ENCODE measurements at regions of chr11 and their contacts with region 1.

Region 1: GRCh38 chr11:12288212-12288930 is 89.0 kb upstream of the PARVA start:
- DNase-seq: peak; percentile 94
- ATAC-seq: peak; percentile 21
- H3K4me3 ChIP-seq: no peak overlapping the region
- H3K27ac ChIP-seq: peak overlapping the region; percentile 97
- H3K4me1 ChIP-seq: peaks cover 34% of the 10 kb centered on the region
- H3K27me3 ChIP-seq: no peaks in the 10 kb centered on the region
- CTCF ChIP-seq: peak; percentile 99
- POLR2A ChIP-seq: no peak
- RAD21 ChIP-seq: peak; percentile 98

Region 2: GRCh38 chr11:12318791-12319438 is 30.5 kb after region 1 on chr11:
- CTCF ChIA-PET with region 1: interaction called, 11 read pairs
- POLR2A ChIA-PET with region 1: interaction called, 9 read pairs
- dilution Hi-C with region 1: no loop called
- in situ Hi-C with region 1: no loop called
- intact Hi-C with region 1: loop called (anchors 1 kb)
- DNase-seq: peak; percentile 89
- ATAC-seq: peak; percentile 70
- H3K4me3 ChIP-seq: no peak overlapping the region
- H3K27ac ChIP-seq: peak overlapping the region; percentile 96
- H3K4me1 ChIP-seq: peaks cover 23% of the 10 kb centered on the region
- H3K27me3 ChIP-seq: no peaks in the 10 kb centered on the region
- CTCF ChIP-seq: no peak
- POLR2A ChIP-seq: no peak
- RAD21 ChIP-seq: no peak

Region 3: DNA sequence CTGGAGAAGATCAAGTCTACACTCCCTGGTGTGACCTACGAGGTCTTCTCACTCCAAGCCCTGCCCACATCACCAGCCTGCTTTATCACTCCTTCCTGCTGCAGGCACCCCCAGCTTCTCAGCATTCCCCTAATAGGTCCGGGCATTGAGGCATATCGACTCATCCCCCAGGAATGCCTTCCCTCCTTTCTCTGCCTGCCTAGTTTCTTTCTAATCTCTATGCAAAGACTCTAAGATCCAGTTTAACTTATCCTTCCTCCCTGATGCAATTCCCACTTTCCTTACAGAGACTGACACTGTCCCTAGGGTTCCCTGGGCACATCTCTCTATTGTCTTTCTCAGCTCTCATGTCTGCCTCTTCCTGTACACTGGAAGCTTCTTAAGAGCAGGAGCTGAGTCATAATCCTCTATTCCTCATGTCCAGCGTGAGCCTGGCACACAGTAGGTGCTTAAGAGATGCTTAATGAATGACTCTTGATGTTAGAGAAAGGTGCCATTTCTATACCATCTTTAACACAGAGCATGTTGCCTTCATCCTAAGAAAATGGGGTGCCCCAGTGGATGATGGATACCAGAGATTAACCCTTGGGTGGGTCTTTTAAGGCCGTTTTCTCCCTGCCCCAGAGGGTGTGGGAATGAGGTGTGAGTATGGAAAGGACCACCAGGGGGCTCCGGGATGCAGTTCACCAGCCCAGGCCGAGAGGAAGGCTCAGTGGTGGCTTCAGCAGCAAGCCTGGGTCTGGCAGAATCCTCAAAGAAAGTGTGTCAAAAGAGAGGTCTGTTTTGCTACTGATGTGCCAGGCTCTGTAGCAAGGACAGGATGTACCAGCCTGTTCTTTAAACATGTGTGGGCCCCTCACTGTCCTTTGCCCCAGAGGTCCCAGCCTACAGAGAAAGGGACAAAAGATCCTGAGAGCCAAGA is 123.7 kb after region 1 on chr11:
- CTCF ChIA-PET with region 1: no interaction called
- POLR2A ChIA-PET with region 1: no interaction called
- dilution Hi-C with region 1: no loop called
- in situ Hi-C with region 1: no loop called
- intact Hi-C with region 1: loop called (anchors 1 kb)
- DNase-seq: peak; percentile 95
- ATAC-seq: peak; percentile 80
- H3K4me3 ChIP-seq: peak overlapping the region; percentile 2; the same call in 1 of the 2 replicates
- H3K27ac ChIP-seq: peak overlapping the region; percentile 95
- H3K4me1 ChIP-seq: peaks cover 54% of the 10 kb centered on the region
- H3K27me3 ChIP-seq: no peaks in the 10 kb centered on the region
- CTCF ChIP-seq: peak; percentile 85
- POLR2A ChIP-seq: no peak
- RAD21 ChIP-seq: peak; percentile 84

Region 4: GRCh38 chr11:12469451-12469850 is 181.1 kb after region 1 on chr11:
- CTCF ChIA-PET with region 1: no interaction called
- POLR2A ChIA-PET with region 1: interaction called, 3 read pairs
- dilution Hi-C with region 1: no loop called
- in situ Hi-C with region 1: no loop called
- intact Hi-C with region 1: loop called (anchors 5 kb)
- DNase-seq: peak; percentile 26
- ATAC-seq: peak; percentile 73
- H3K4me3 ChIP-seq: no peak overlapping the region
- H3K27ac ChIP-seq: peak overlapping the region; percentile 55; the same call in 1 of the 2 replicates
- H3K4me1 ChIP-seq: peaks cover 9% of the 10 kb centered on the region
- H3K27me3 ChIP-seq: no peaks in the 10 kb centered on the region
- CTCF ChIP-seq: no peak
- POLR2A ChIP-seq: no peak
- RAD21 ChIP-seq: no peak

Region 5: GRCh38 chr11:12673924-12674570 is 385.7 kb after region 1 on chr11 and contains the start of gene TEAD1:
- CTCF ChIA-PET with region 1: interaction called, 4 read pairs
- POLR2A ChIA-PET with region 1: no interaction called
- dilution Hi-C with region 1: no loop called
- in situ Hi-C with region 1: no loop called
- intact Hi-C with region 1: loop called (anchors 1 kb)
- DNase-seq: peak; percentile 95
- ATAC-seq: peak; percentile 90
- H3K4me3 ChIP-seq: peak within 1 kb of the TSS; percentile 78
- H3K27ac ChIP-seq: peak within 1 kb of the TSS; percentile 100
- H3K4me1 ChIP-seq: peaks cover 3% of the 10 kb centered on the region
- H3K27me3 ChIP-seq: no peaks in the 10 kb centered on the region
- CTCF ChIP-seq: no peak
- POLR2A ChIP-seq: peak; percentile 55
- RAD21 ChIP-seq: no peak
- total RNA-seq, gene TEAD1: 69.2 and 95.5 TPM in 2 replicates

Region 6: DNA sequence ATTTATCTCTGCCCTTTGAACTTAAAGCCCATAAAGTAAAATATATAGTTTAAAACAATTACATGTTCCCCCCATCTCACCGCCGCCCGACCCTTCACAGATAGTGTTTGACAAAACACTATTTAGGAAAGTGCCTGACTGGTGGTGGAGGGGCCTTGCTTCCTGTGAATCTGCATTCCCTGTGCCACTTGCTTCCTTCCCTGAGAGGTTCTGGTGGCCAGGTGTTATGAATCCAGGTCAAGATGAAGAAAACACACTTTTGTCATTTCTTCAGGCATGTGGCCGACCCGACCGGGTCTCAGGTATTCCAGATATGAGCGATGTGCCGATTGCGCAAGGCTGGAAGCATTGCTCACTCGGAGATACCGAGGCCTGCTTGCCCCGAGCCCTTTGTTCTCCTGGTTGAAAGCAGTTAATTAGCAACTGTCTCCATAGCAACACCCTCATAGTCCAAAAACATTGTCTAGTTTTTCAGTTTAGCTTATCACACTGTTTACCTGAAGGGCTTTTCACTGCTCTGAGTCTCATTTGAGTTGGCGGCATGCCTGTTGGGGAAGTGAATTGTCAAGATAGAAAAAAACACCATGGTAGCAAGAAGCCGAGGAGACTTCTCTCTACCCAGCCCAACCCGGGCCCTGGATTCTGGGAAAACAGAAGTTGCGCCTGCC is 514.2 kb after region 1 on chr11:
- CTCF ChIA-PET with region 1: no interaction called
- POLR2A ChIA-PET with region 1: no interaction called
- dilution Hi-C with region 1: no loop called
- in situ Hi-C with region 1: no loop called
- intact Hi-C with region 1: loop called (anchors 5 kb)
- DNase-seq: peak; percentile 90
- ATAC-seq: peak; percentile 32
- H3K4me3 ChIP-seq: no peak overlapping the region
- H3K27ac ChIP-seq: peak overlapping the region; percentile 63
- H3K4me1 ChIP-seq: peaks cover 38% of the 10 kb centered on the region
- H3K27me3 ChIP-seq: no peaks in the 10 kb centered on the region
- CTCF ChIP-seq: no peak
- POLR2A ChIP-seq: no peak
- RAD21 ChIP-seq: no peak

Region 7: GRCh38 chr11:12893787-12894672 is 605.7 kb after region 1 on chr11:
- CTCF ChIA-PET with region 1: interaction called, 19 read pairs
- POLR2A ChIA-PET with region 1: no interaction called
- dilution Hi-C with region 1: no loop called
- in situ Hi-C with region 1: no loop called
- intact Hi-C with region 1: loop called (anchors 1 kb)
- DNase-seq: peak; percentile 52
- ATAC-seq: peak; percentile 68
- H3K4me3 ChIP-seq: no peak overlapping the region
- H3K27ac ChIP-seq: peak overlapping the region; percentile 56
- H3K4me1 ChIP-seq: peaks cover 25% of the 10 kb centered on the region
- H3K27me3 ChIP-seq: no peaks in the 10 kb centered on the region
- CTCF ChIP-seq: peak; percentile 83
- POLR2A ChIP-seq: no peak
- RAD21 ChIP-seq: peak; percentile 69